ENCODE measurements at regions of chr17 and their contacts with region 1.

Region 1: GRCh38 chr17:350706-351448 is 1.7 kb downstream of the RPH3AL start:
- DNase-seq: peak; percentile 95
- H3K4me3 ChIP-seq: no peak overlapping the region
- H3K27ac ChIP-seq: peak overlapping the region; percentile 62
- H3K4me1 ChIP-seq: peaks cover 51% of the 10 kb centered on the region
- H3K27me3 ChIP-seq: no peaks in the 10 kb centered on the region
- CTCF ChIP-seq: no peak
- POLR2A ChIP-seq: peak; percentile 90

Region 2: GRCh38 chr17:333626-334396 is 17.1 kb before region 1 on chr17:
- CTCF ChIA-PET with region 1: interaction called, 5 read pairs
- POLR2A ChIA-PET with region 1: interaction called, 3 read pairs
- dilution Hi-C with region 1: no loop called
- intact Hi-C with region 1: loop called (anchors 1 kb)
- DNase-seq: peak; percentile 82
- H3K4me3 ChIP-seq: peak overlapping the region; percentile 5 to 58 (median 30)
- H3K27ac ChIP-seq: no peak overlapping the region
- H3K4me1 ChIP-seq: peaks cover 10% of the 10 kb centered on the region
- H3K27me3 ChIP-seq: no peaks in the 10 kb centered on the region
- CTCF ChIP-seq: no peak
- POLR2A ChIP-seq: no peak

Region 3: GRCh38 chr17:373613-374230 is 22.8 kb after region 1 on chr17:
- CTCF ChIA-PET with region 1: no interaction called
- POLR2A ChIA-PET with region 1: no interaction called
- dilution Hi-C with region 1: no loop called
- intact Hi-C with region 1: no loop called
- DNase-seq: no peak
- H3K4me3 ChIP-seq: no peak overlapping the region
- H3K27ac ChIP-seq: no peak overlapping the region
- H3K4me1 ChIP-seq: no peaks in the 10 kb centered on the region
- H3K27me3 ChIP-seq: peaks cover 0 to 5% of the 10 kb centered on the region in 2 experiments
- CTCF ChIP-seq: no peak
- POLR2A ChIP-seq: no peak